KBM-7 (cell line): ENCODE measurements at regions of chr17 and their contacts with region 1.

Region 1: GRCh38 chr17:29977836-29978235 is 36.4 kb downstream of the EFCAB5 start:
- DNase-seq: no peak

Region 2: DNA sequence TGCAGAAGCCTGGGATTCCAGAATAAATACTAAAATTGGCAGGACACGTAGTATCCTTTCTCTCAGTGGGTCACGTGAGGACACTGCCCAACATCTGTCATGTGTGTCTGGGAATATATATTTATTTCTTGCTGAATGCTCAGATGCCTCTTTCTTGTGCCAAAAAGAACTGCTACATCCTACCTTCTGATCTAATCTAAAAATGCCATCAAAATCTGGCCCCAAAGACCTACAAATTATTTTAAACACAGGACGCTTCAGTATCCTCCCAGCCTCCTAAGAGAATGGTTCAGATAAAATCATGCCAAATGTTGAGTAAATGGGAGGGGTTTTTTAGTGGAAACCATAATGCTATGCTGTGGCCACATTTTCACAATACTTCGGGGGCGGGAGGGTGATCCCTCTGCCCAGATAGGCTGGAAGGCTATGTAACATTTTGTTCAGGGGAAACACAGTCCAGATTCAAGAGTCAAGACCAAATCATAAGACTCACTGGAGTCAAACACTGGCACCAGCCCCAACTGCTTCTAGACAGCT is 332.3 kb before region 1 on chr17:
- in situ Hi-C with region 1: loop called (anchors 25 kb)
- DNase-seq: no peak

Region 3: GRCh38 chr17:30590081-30590733 is 612.4 kb after region 1 on chr17:
- in situ Hi-C with region 1: no loop called
- DNase-seq: peak; percentile 53